PC-3 (cell line): ENCODE measurements at regions of chr3 and their contacts with region 1.

Region 1: GRCh38 chr3:71103430-71103921 is 480.1 kb downstream of the FOXP1 start:
- DNase-seq: peak; percentile 79
- ATAC-seq: peak; percentile 7
- H3K4me3 ChIP-seq: no peak overlapping the region
- H3K27ac ChIP-seq: peak overlapping the region; percentile 74
- H3K4me1 ChIP-seq: peaks cover 54% of the 10 kb centered on the region
- H3K27me3 ChIP-seq: no peaks in the 10 kb centered on the region
- CTCF ChIP-seq: no peak

Region 2: GRCh38 chr3:71069797-71070196 is 33.7 kb before region 1 on chr3:
- CTCF ChIA-PET with region 1: no interaction called
- POLR2A ChIA-PET with region 1: interaction called, 3 read pairs
- intact Hi-C with region 1: loop called (anchors 5 kb)
- DNase-seq: peak; percentile 86
- ATAC-seq: peak; percentile 30
- H3K4me3 ChIP-seq: no peak overlapping the region
- H3K27ac ChIP-seq: no peak overlapping the region
- H3K4me1 ChIP-seq: peaks cover 40% of the 10 kb centered on the region
- H3K27me3 ChIP-seq: no peaks in the 10 kb centered on the region
- CTCF ChIP-seq: peak; percentile 93

Region 3: DNA sequence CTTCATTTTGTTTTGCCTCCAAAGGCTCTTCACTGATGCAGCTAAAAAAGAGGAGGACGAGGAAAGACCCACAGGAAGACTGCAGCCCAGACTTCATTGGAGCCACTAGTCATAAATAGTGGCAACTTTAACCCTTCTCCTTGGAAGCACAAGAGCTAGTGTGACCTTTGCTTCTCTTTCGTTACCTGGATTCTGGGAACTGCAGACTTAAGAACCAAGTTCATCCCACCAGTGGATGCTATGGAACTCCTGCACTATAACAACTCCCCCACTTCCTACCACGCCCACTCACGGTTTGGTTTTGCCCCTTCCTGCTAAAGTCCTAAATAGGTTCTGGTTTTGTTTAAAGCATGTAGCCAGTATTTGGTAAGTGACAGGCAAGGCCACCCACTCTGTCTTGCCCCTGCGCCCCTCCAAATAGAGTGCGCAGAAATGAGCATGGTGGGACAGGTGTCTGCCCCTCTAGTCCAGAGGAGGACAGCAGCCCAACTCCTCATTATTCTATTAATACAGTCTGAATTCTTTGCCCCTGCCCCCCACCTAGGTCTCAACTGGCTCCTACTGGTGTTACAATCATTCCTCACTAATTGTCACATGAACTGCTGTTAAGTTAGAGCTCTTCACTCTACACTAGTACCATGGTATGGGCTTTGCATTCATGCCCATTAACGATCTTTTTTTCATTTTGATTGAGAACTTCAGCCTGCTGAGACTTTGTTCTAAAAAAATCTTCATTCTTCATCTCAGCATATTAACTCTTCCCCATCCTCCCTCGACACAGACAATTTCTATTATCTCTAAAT is 24.6 kb before region 1 on chr3:
- CTCF ChIA-PET with region 1: no interaction called
- POLR2A ChIA-PET with region 1: no interaction called
- intact Hi-C with region 1: loop called (anchors 2 kb)
- DNase-seq: no peak
- ATAC-seq: peak; percentile 48
- H3K4me3 ChIP-seq: peak overlapping the region; percentile 42; the same call in 1 of the 2 replicates
- H3K27ac ChIP-seq: peak overlapping the region; percentile 62
- H3K4me1 ChIP-seq: peaks cover 25% of the 10 kb centered on the region
- H3K27me3 ChIP-seq: no peaks in the 10 kb centered on the region
- CTCF ChIP-seq: no peak

Region 4: DNA sequence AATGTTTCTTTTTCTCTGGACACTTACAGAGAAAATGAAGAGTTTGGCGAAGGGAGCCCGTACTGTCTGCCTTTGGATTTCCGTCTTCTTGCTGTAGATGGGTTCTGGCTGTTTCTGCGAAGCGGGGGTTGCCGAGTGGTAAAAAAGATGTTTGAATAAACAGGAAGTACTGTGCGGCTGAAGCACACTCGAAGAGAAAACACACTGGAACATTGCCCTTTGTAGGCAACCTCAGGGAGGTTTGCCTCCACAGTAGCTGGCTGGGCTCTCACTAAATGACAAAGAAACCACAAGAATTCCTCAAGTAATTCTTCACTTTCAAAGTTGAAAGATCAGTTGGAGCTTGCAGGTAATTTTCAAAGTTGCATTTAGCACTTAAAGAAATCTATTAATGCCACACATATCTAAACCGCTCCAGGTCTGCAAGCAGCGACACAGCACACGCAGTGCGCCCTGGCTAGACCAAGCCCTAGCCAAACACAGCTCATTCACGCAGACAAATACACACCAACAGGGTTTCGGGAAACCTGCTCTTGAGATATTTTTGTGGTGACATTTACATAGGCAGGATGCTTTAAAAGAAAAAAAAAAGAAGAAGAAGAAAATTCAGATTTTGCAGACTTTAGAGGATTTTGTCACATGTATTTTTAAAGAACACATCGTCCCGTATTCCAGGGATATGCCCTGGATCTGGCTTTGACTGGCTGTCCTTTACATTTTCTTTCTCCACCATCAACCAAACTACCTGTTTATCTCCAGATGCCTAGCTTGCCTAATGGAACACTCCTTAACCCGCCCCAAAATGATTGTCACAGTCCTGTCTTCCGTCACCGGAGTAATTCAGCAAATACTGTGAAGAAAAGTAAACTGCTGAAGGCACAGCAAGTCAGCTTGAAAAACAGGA is 27.2 kb after region 1 on chr3:
- CTCF ChIA-PET with region 1: no interaction called
- POLR2A ChIA-PET with region 1: interaction called, 3 read pairs
- intact Hi-C with region 1: loop called (anchors 1 kb)
- DNase-seq: peak; percentile 76
- ATAC-seq: peak; percentile 79
- H3K4me3 ChIP-seq: peak overlapping the region; percentile 71
- H3K27ac ChIP-seq: peak overlapping the region; percentile 8
- H3K4me1 ChIP-seq: peaks cover 32% of the 10 kb centered on the region
- H3K27me3 ChIP-seq: no peaks in the 10 kb centered on the region
- CTCF ChIP-seq: no peak

Region 5: DNA sequence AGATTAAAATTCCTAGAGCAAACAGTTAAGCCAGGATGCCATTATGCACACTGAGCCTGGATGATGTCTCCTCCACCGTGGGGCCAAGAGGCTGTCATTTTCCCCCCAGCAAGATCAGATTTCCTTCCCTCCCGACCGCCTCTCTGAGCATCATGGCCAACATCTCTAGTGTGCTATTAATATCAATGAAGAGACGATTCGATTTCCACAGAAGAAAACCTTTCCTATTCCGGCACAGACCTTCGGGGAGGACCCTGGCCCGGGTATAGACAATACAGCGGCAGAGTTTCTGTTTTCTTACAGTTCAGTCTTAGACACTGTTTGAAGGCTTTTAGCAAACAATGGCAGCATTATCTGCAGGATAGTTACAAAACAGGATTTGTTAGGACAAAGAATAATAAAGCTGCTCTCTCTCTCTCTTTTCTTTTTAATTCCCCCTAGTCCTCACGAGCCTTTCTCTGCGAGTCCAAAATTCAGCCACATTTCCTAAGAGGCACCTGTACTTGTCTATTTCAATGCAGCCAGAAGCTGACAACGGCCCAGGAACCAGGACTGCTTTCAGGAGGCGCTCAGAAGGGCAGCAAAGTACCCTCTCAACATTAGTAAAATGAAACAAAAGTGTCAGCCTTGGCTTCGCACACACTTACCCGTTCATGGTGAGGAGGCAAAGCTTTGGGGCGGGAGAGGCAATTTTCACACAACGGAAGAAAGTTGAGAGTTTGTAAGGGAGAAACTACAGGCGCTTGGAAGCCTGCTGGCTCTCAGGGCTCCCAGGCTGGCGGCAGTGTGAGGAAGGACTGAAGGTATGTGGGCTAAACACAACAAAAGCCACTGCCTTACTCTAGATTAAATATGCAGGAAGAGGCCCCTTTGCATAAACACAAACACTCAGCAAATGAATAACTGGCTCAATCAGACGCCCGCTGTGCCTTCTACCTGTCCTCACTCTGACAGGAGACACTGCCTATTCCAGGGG is 202.0 kb after region 1 on chr3:
- CTCF ChIA-PET with region 1: interaction called, 11 read pairs
- POLR2A ChIA-PET with region 1: no interaction called
- intact Hi-C with region 1: loop called (anchors 1 kb)
- DNase-seq: peak; percentile 38
- ATAC-seq: peak; percentile 65
- H3K4me3 ChIP-seq: peak overlapping the region; percentile 57
- H3K27ac ChIP-seq: no peak overlapping the region
- H3K4me1 ChIP-seq: peaks cover 24% of the 10 kb centered on the region
- H3K27me3 ChIP-seq: no peaks in the 10 kb centered on the region
- CTCF ChIP-seq: no peak

Region 6: DNA sequence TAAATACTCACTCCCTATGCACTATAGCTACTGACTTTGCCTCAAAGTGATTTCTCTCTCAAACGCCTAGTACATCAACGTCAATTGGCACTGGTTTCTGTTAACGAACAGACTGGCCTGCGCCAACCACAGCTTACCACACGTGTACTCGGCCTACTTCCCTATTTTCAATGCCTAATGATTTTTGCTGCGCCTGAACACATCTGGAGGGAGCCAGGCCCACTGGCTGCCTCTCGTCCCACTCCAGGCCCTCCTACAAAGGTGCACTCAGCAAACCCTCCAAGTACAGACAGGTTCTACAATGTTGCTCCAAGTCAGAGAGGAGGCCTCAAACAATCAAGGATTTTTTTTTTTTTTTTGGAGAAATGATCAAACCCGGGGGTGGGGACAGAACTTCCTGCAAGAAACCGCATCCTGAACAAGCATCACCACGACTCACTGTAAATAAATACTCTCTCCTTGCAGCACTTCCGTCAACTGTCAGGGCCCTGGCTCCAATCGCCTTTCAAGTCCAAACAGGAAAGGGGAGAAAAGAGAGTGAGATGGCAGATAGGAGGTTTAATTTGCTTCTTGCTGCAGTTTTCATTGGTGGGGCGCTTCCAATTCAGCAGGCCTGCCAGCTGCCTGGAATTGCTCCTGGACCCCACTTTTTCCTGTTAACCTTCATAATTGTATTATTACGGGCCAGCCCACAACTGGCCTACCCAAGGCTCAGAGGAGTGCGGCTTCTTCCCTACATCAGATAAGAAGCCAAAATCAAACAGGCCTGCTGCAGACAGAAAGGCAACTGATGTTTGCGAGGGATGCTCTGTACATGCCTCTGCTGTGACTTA is 340.8 kb after region 1 on chr3:
- CTCF ChIA-PET with region 1: no interaction called
- POLR2A ChIA-PET with region 1: no interaction called
- intact Hi-C with region 1: loop called (anchors 10 kb)
- DNase-seq: peak; percentile 91
- ATAC-seq: peak; percentile 89
- H3K4me3 ChIP-seq: peak overlapping the region; percentile 14; the same call in 1 of the 2 replicates
- H3K27ac ChIP-seq: peak overlapping the region; percentile 82
- H3K4me1 ChIP-seq: peaks cover 22% of the 10 kb centered on the region
- H3K27me3 ChIP-seq: no peaks in the 10 kb centered on the region
- CTCF ChIP-seq: no peak